ENCODE measurements at regions of chr2 and their contacts with region 1.

Region 1: DNA sequence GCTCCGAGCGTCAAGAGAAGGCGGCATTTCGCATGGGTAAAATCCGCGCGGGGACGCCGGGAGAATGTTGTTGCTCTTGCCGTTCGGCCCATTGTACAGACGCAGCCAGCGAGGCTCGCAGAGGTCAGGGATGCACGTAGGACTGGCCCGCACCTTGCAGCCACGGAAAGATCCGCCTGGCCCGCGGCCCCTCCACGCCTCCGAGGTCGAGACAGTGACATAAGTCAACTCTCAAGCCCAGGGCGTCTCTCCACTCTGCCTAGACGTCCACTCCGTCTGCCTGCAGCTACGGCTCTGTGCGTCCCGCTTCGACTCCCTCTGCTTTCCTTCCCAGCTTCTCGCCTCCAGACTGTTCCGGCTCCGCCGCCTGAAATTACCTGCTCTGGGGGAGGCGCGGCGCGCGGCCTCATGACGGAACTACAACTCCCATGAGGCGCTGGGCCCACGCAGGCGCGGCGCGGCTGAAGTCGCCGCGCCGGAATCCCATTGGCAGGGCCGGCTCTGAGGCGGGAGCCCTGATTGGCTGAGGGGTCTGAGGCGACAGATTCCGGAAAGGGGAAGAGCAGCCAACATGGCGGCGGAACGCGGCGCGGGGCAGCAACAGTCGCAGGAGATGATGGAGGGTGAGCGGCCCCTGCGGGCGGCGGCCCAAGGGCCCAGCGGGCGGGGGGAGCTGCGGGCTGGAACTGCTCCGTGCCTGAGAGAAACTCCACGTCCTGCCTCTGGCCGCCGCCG is at the start of gene PPP1R7:
- DNase-seq: peak; percentile 90
- ATAC-seq: peak; percentile 90
- H3K4me3 ChIP-seq: peak within 1 kb of the TSS; percentile 75
- H3K27ac ChIP-seq: peak within 1 kb of the TSS; percentile 16
- H3K4me1 ChIP-seq: peaks cover 7% of the 10 kb centered on the region; the same call in 1 of the 2 replicates
- H3K27me3 ChIP-seq: no peaks in the 10 kb centered on the region
- CTCF ChIP-seq: 0 out of 2 replicates have a peak, but pooled peaks have one; percentile 25
- POLR2A ChIP-seq: peak; percentile 80
- RAD21 ChIP-seq: 0 out of 2 replicates have a peak, but pooled peaks have one; percentile 22
- total RNA-seq, gene PPP1R7: 60.8 and 104 TPM in 2 replicates

Region 2: GRCh38 chr2:240638512-240639160 is 511.5 kb before region 1 on chr2:
- CTCF ChIA-PET with region 1: no interaction called
- POLR2A ChIA-PET with region 1: no interaction called
- dilution Hi-C with region 1: no loop called
- in situ Hi-C with region 1: no loop called
- intact Hi-C with region 1: no loop called
- DNase-seq: no peak
- ATAC-seq: no peak
- H3K4me3 ChIP-seq: no peak overlapping the region
- H3K27ac ChIP-seq: no peak overlapping the region
- H3K4me1 ChIP-seq: no peaks in the 10 kb centered on the region
- H3K27me3 ChIP-seq: peaks cover 18% of the 10 kb centered on the region
- CTCF ChIP-seq: no peak
- POLR2A ChIP-seq: no peak
- RAD21 ChIP-seq: no peak

Region 3: DNA sequence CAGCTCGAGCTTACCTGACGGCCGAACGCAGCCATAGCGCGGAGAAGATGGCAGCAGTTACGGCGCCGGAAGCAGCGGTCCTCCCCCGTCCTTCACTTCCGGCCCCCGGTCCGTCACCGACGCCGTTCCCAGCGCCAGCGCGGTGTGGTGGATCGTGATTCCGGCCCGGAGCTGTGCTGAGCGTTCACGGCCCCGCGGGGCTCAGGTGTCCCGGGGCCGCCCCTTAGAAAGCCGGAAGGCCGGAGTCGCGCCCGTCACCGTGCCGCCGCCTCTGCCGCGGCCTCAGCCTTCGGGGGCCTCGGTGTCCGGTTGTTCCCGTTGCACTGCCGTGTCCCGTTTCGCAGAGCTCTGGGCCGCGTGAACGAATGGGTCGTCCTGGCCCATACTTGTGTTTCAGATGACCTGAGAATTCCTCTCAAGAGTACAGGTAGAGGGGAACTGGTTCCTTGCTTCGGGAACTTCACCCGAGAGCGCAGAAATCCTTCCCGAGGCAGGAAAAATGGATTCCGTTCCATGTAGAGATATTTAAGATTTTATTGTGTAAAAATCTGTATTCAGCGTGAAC is 47.8 kb before region 1 on chr2 and contains the start of gene MTERF4:
- CTCF ChIA-PET with region 1: no interaction called
- POLR2A ChIA-PET with region 1: interaction called, 5 read pairs
- dilution Hi-C with region 1: no loop called
- in situ Hi-C with region 1: no loop called
- intact Hi-C with region 1: loop called (anchors 2 kb)
- DNase-seq: peak; percentile 76
- ATAC-seq: peak; percentile 98
- H3K4me3 ChIP-seq: peak within 1 kb of the TSS; percentile 87
- H3K27ac ChIP-seq: peak within 1 kb of the TSS; percentile 73
- H3K4me1 ChIP-seq: no peaks in the 10 kb centered on the region; the same call in 1 of the 2 replicates
- H3K27me3 ChIP-seq: no peaks in the 10 kb centered on the region
- CTCF ChIP-seq: no peak
- POLR2A ChIP-seq: no peak; the same call in none of the 2 replicates
- RAD21 ChIP-seq: peak; percentile 11; the same call in 1 of the 2 replicates
- total RNA-seq, gene MTERF4: 33.3 and 36.9 TPM in 2 replicates

Measured in IMR-90 (cell line).